Natural killer cell (primary cell): ENCODE measurements at regions of chr15 and their contacts with region 1.

Region 1: GRCh38 chr15:44728576-44729407 is 7.5 kb upstream of the TRIM69 start:
- DNase-seq: peak; percentile 94 to 98
- ATAC-seq: peak; percentile 75 to 92 (median 83)
- H3K4me3 ChIP-seq: peak overlapping the region; percentile 98
- H3K4me3 Mint-ChIP-seq: peak overlapping the region; percentile 98
- H3K27ac ChIP-seq: peak overlapping the region; percentile 96
- H3K27ac Mint-ChIP-seq: peak overlapping the region; percentile 100
- H3K4me1 ChIP-seq: peaks cover 53% of the 10 kb centered on the region
- H3K4me1 Mint-ChIP-seq: peaks cover 57 to 59% of the 10 kb centered on the region in 2 donors
- H3K27me3 ChIP-seq: no peaks in the 10 kb centered on the region
- H3K27me3 Mint-ChIP-seq: no peaks in the 10 kb centered on the region
- CTCF ChIP-seq: no peak

Region 2: DNA sequence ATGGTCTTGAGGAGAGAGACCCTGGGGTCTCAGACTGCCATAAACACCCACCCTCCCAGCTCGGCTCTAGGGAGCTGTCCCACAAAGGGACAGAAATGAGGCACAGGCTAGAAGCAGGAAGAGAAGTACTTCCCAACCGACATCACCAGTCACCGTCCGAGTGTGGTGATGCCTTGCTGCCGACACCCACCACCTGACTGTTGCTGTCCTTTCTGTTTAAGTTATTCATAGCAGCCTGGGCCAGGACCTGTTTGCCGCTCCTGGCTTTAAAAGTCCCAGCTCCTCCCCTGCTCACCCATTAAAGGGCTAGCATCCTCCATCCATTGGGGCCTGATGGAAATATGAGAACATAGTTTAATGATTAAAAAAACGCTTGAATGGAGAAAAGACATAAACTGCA is 52.1 kb before region 1 on chr15:
- intact Hi-C with region 1: loop called (anchors 2 kb)
- DNase-seq: peak; percentile 57 to 59
- ATAC-seq: peak; percentile 73 to 76 (median 74)
- H3K4me3 ChIP-seq: peak overlapping the region; percentile 33
- H3K4me3 Mint-ChIP-seq: peak overlapping the region; percentile 90
- H3K27ac ChIP-seq: peak overlapping the region; percentile 97
- H3K27ac Mint-ChIP-seq: peak overlapping the region; percentile 76 to 84
- H3K4me1 ChIP-seq: peaks cover 90% of the 10 kb centered on the region
- H3K4me1 Mint-ChIP-seq: peaks cover 76% of the 10 kb centered on the region in 2 donors
- H3K27me3 ChIP-seq: no peaks in the 10 kb centered on the region
- H3K27me3 Mint-ChIP-seq: no peaks in the 10 kb centered on the region
- CTCF ChIP-seq: no peak

Region 3: DNA sequence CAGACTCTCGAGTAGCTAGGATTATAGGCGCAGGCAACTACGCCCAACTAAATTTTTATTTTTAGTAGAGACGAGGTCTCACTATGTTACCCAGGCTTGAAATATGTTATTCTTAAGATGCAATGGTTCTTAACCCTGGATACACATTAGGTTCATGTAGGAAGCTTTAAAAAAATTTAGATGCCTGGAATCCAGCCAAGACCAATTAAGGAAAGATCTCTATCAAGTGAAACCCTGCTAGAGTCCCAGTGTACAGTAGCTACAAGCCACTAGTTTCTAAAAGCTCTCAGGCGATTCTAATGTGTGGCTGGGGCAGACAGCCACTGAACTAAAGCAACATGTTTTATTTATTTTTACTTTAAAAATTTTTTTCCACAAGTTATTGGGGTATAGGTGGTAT is 40.7 kb after region 1 on chr15:
- intact Hi-C with region 1: no loop called
- DNase-seq: no peak
- ATAC-seq: no peak
- H3K4me3 ChIP-seq: no peak overlapping the region
- H3K4me3 Mint-ChIP-seq: no peak overlapping the region
- H3K27ac ChIP-seq: no peak overlapping the region
- H3K27ac Mint-ChIP-seq: no peak overlapping the region
- H3K4me1 ChIP-seq: no peaks in the 10 kb centered on the region
- H3K4me1 Mint-ChIP-seq: no peaks in the 10 kb centered on the region
- H3K27me3 ChIP-seq: no peaks in the 10 kb centered on the region
- H3K27me3 Mint-ChIP-seq: peaks cover 3 to 6% of the 10 kb centered on the region in 2 donors
- CTCF ChIP-seq: no peak